Activated CD8-positive, alpha-beta T cell treated with anti-CD3 and anti-CD28 coated beads for 36 hours (primary cell): ENCODE measurements at regions of chr4 and their contacts with region 1.

Region 1: DNA sequence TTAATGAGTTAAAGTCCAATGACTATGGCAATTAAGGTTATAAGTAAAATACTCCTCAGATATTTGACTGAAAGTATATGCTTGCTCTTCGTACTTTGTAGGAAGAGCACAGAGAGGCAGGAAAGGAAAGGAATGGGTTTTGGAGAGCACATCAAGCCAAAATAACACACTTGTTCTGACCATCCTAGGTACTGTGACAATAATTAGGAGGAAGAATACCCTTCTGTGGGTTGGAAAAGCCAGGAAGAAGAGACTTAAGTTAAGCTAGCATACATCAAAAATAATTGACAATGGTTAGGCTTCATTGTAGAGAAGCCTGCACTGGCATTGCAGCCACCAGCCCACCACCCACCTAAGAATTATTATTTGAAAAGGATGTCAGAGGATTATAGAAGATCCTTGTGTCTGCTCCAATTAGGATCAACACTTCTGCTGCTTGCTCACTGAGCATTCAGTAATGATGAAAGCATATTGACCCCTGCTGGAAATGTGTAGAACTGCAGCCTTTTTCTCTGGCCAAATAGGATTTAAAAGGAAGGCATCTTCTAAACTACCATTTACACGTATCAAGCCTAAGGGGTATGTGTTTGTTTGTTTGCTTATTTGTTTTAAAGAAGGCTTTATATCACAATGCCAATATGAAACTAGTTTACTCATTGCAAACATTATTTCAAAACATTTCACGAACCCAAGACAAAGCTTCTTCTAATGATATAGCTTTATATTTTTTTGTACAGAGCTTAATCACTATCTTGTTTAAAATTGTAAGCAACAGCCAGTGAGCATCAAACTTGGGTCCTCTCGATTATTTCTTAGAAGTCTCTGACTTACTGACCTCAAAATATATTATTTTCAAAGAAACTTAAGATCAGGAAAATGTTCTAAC is 286.2 kb upstream of the TET2 start:
- DNase-seq: peak; percentile 72
- ATAC-seq: peak; percentile 80
- H3K4me3 Mint-ChIP-seq: no peak overlapping the region
- H3K27ac Mint-ChIP-seq: no peak overlapping the region
- H3K4me1 Mint-ChIP-seq: no peaks in the 10 kb centered on the region
- H3K27me3 Mint-ChIP-seq: peaks cover 4% of the 10 kb centered on the region
- CTCF ChIP-seq: peak; percentile 70

Region 2: GRCh38 chr4:104490770-104491480 is 369.6 kb before region 1 on chr4:
- CTCF ChIA-PET with region 1: no interaction called
- POLR2A ChIA-PET with region 1: no interaction called
- intact Hi-C with region 1: loop called (anchors 10 kb)
- DNase-seq: peak; percentile 53
- ATAC-seq: peak; percentile 24
- H3K4me3 Mint-ChIP-seq: peak overlapping the region; percentile 55
- H3K27ac Mint-ChIP-seq: no peak overlapping the region
- H3K4me1 Mint-ChIP-seq: peaks cover 29% of the 10 kb centered on the region
- H3K27me3 Mint-ChIP-seq: peaks cover 58% of the 10 kb centered on the region
- CTCF ChIP-seq: no peak

Region 3: DNA sequence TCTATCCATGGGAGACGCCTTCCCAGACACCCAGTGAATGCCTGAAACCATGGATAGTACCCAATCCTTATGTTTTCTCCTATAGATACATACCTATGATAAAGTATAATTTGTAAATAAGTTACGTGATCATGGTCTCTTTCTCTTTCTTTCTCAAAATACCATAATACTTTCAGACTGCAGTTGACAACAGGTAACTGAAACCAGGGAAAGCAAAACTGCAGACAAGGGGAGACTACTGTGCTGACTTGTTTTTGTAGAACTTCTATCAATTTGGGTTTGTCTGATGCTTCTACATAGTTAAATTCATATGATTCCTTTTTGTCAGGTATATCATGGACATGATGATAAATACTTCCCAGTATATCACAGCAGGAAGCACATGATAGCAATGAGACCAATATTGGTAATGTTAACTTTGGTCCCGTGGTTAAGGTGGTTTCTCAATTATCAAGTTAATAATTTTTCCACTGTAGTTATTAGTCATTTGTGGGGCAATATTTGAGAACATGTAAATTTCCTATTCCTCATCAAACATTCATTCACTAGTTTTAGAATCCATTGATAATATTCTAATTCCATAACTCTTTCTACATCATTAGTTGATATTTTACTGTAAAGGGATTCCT is 11.8 kb before region 1 on chr4:
- CTCF ChIA-PET with region 1: interaction called, 11 read pairs
- POLR2A ChIA-PET with region 1: no interaction called
- intact Hi-C with region 1: no loop called
- DNase-seq: no peak
- ATAC-seq: no peak
- H3K4me3 Mint-ChIP-seq: no peak overlapping the region
- H3K27ac Mint-ChIP-seq: no peak overlapping the region
- H3K4me1 Mint-ChIP-seq: no peaks in the 10 kb centered on the region
- H3K27me3 Mint-ChIP-seq: no peaks in the 10 kb centered on the region
- CTCF ChIP-seq: no peak

Region 4: DNA sequence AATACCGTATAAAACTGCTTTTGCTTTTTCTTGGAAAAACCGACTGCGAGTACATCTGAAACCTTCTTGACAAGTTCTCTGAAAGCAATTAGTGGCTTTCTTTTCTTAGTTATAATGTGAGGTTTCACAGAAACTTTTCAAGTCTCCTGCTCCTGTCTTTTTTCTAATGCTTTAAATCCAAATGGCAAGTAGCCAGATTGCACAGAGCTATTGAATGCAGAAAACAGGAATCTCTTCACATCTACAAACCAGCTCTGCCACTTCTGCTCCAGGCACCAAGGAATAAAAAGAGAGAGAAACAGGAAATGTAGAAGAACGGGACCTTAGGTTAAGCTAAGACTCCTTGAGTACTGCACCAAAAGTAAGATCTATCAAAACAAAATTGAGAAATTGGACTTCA is 18.9 kb after region 1 on chr4:
- CTCF ChIA-PET with region 1: interaction called, 22 read pairs
- POLR2A ChIA-PET with region 1: no interaction called
- intact Hi-C with region 1: no loop called
- DNase-seq: no peak
- ATAC-seq: peak; percentile 73
- H3K4me3 Mint-ChIP-seq: peak overlapping the region; percentile 7
- H3K27ac Mint-ChIP-seq: peak overlapping the region; percentile 50
- H3K4me1 Mint-ChIP-seq: peaks cover 17% of the 10 kb centered on the region
- H3K27me3 Mint-ChIP-seq: peaks cover 5% of the 10 kb centered on the region
- CTCF ChIP-seq: no peak